ENCODE measurements at regions of chr5 and their contacts with region 1.

Region 1: GRCh38 chr5:38347040-38347763 is 88.8 kb downstream of the EGFLAM start:
- DNase-seq: peak; percentile 75
- H3K4me3 ChIP-seq: no peak overlapping the region
- H3K27ac ChIP-seq: peak overlapping the region; percentile 45
- H3K4me1 ChIP-seq: peaks cover 12% of the 10 kb centered on the region
- H3K27me3 ChIP-seq: no peaks in the 10 kb centered on the region
- CTCF ChIP-seq: no peak

Region 2: DNA sequence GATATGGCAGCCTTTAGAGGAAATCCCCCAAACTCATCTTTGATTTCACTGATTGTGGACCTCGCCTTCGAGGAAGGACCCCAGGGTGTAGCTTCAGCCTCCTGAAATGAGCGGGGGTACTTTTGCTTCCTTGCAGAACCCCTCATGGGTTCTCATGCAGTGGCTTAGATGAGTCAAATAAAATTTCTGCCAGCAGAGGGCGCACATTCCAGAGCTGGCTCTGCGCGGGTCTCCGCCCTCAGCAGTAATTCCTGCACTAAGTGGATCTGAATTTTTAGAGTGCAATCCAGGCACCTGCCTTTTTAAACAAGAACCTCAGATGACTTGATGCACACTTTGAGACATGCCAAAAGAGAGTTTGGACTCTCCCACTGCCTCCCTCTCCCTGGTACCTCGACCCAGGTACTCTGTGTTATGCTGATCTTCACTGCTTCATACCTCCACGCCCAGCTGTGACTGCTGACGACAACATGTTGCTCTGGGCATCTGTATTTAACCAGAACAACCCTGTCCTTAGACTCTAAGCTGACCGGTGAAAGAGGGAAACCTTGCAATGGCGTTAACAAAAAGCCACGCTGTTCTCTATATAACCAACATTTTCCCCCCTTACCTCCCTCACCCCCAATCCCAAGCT is 81.5 kb before region 1 on chr5:
- CTCF ChIA-PET with region 1: no interaction called
- dilution Hi-C with region 1: no loop called
- in situ Hi-C with region 1: no loop called
- intact Hi-C with region 1: loop called (anchors 5 kb)
- DNase-seq: peak; percentile 29
- H3K4me3 ChIP-seq: no peak overlapping the region
- H3K27ac ChIP-seq: no peak overlapping the region
- H3K4me1 ChIP-seq: no peaks in the 10 kb centered on the region
- H3K27me3 ChIP-seq: peaks cover 7% of the 10 kb centered on the region
- CTCF ChIP-seq: peak; percentile 73 to 81

Region 3: DNA sequence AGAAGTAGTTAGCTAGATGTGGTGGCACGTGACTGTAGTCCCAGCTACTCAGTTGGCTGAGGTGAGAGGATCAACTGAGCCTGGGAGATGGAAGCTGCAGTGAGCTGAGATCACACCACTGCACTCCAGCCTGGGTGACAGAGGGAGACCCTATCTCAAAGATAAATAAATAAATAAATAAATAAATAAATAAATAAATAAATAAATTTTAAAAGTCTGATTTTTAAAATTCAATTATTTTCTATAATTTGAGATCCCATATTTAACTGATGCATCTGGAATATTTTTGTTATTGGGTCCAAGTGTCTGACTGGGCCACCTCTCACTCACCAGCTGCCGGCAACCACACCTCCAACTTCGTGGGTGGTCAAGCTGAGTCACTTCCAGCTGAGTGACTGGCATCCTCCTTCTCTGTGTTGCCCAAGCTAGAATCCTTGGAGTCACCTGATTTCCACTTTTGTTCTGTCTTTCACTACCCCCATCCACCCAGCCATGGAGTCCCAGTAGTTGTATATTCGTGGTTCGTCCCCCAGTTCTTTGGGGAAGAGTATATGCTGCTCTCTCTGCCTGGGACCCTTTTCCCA is 18.0 kb before region 1 on chr5:
- CTCF ChIA-PET with region 1: no interaction called
- dilution Hi-C with region 1: no loop called
- in situ Hi-C with region 1: no loop called
- intact Hi-C with region 1: loop called (anchors 2 kb)
- DNase-seq: peak; percentile 70
- H3K4me3 ChIP-seq: no peak overlapping the region
- H3K27ac ChIP-seq: no peak overlapping the region
- H3K4me1 ChIP-seq: peaks cover 12% of the 10 kb centered on the region
- H3K27me3 ChIP-seq: no peaks in the 10 kb centered on the region
- CTCF ChIP-seq: no peak

Region 4: GRCh38 chr5:38396766-38397165 is 49.6 kb after region 1 on chr5:
- CTCF ChIA-PET with region 1: no interaction called
- dilution Hi-C with region 1: no loop called
- in situ Hi-C with region 1: no loop called
- intact Hi-C with region 1: no loop called
- DNase-seq: no peak
- H3K4me3 ChIP-seq: no peak overlapping the region
- H3K27ac ChIP-seq: no peak overlapping the region
- H3K4me1 ChIP-seq: no peaks in the 10 kb centered on the region
- H3K27me3 ChIP-seq: no peaks in the 10 kb centered on the region
- CTCF ChIP-seq: no peak

Measured in mammary epithelial cell (primary cell).